Naive thymus-derived CD8-positive, alpha-beta T cell (primary cell): ENCODE measurements at regions of chr2 and their contacts with region 1.

Region 1: GRCh38 chr2:112996635-112997034 is 8.6 kb upstream of the IL36A start:
- DNase-seq: peak; percentile 49 to 91 (median 82)
- ATAC-seq: peak; percentile 97 to 99
- H3K4me3 Mint-ChIP-seq: peak overlapping the region; percentile 58 to 87 (median 72)
- H3K27ac Mint-ChIP-seq: peak overlapping the region; percentile 89 to 99 (median 96)
- H3K4me1 Mint-ChIP-seq: peaks cover 15 to 51% (median 45%) of the 10 kb centered on the region in 4 donors
- H3K27me3 Mint-ChIP-seq: peaks cover 0 to 4% (median 0%) of the 10 kb centered on the region in 5 donors

Region 2: GRCh38 chr2:112985090-112985489 is 11.5 kb before region 1 on chr2:
- POLR2A ChIA-PET with region 1: interaction called, 20 read pairs
- DNase-seq: peak in 9 of 10 donors; percentile 21 to 80 (median 60)
- ATAC-seq: peak; percentile 96 to 98
- H3K4me3 Mint-ChIP-seq: peak overlapping the region in 6 of 10 donors; percentile 2 to 54 (median 24)
- H3K27ac Mint-ChIP-seq: peak overlapping the region; percentile 37 to 90 (median 85)
- H3K4me1 Mint-ChIP-seq: peaks cover 17 to 34% (median 27%) of the 10 kb centered on the region in 4 donors
- H3K27me3 Mint-ChIP-seq: no peaks in the 10 kb centered on the region

Region 3: GRCh38 chr2:113015646-113016045 is 19.0 kb after region 1 on chr2:
- POLR2A ChIA-PET with region 1: no interaction called
- DNase-seq: no peak
- ATAC-seq: no peak
- H3K4me3 Mint-ChIP-seq: no peak overlapping the region
- H3K27ac Mint-ChIP-seq: no peak overlapping the region
- H3K4me1 Mint-ChIP-seq: peaks cover 0 to 19% (median 8%) of the 10 kb centered on the region in 4 donors
- H3K27me3 Mint-ChIP-seq: peaks cover 0 to 19% (median 1%) of the 10 kb centered on the region in 5 donors